Upper lobe of right lung (tissue), 1 donor: ENCODE measurements at regions of chr6 and their contacts with region 1.

Region 1: DNA sequence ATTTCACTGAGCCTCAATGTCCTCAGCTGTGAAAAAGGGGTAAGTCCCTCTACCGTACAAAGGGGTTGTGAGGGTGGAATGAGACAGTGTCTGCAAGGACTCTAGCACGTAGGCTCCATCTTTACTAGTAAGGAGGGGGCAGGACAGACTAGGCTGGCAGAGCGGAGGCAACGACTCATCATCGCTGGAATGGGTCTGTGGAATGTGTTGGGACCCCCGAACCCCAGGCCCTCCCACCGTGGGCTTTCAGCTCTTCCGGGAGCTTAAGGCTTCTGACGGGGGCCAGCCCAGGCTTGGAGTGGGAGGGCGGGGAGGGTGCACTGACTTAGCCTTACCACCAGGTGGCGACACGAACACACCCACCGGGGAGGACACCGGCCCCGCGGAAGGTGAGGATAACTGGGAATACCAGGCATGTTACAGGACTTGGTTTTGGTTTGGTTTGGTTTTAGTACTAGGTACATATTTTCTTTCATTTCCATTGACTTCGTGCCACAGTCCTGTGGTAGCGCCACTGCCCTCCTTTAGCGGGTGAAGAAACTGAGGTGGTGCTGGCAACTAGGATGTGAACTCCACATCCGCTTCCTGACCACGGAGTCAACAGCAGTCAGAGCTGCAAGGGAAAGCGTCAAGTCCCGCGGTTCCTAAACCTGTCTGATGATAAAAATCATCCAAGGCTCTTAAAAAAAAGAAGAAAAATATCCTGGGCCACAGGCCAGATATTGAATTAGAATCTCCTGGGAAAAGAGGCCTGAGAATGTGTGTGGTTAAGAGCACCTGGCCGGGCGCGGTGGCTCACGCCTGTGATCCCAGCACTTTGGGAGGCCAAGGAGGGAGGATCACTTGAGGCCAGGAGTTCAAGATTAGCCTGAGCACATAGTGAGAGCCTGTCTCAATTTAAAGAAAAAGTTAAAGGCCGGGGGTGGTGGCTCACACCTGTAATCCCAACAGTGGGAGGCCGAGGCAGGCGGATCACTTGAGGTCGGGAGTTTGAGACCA is 10.3 kb upstream of the TULP1 start:
- DNase-seq: peak; percentile 88
- ATAC-seq: peak; percentile 97
- H3K4me3 ChIP-seq: peak overlapping the region; percentile 33
- H3K27ac ChIP-seq: no peak overlapping the region
- H3K4me1 ChIP-seq: no peaks in the 10 kb centered on the region
- H3K27me3 ChIP-seq: no peaks in the 10 kb centered on the region
- CTCF ChIP-seq: peak; percentile 99

Region 2: DNA sequence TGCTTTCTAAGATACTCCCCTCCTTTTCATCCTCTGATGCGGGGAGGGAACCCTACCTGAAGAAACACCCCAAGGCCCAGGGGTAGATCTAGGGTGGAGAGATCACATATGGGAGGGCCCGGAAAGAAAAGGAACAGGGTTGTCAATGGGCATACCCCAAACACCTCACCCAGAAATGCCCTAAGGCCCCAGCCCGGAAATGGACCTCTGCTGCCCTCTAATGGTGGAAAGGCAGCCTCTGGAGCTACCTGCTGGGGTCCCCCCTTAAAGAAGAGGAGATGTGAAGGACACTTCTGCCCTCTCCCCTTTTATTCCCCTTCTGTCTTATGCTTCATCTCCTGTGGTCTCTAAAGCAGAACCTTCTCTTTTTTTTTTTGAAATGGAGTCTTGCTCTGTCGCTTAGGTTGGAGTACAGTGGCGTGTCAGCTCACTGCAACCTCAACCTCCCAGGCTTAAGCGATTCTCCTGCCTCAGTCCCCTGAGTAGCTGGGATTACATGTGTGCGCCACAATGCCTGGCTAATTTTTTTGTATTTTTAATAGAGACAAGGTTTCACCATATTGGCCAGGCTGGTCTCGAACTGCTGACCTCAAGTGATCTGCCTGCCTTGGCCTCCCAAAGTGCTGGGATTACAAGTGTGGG is 213.4 kb after region 1 on chr6:
- intact Hi-C with region 1: loop called (anchors 10 kb)
- DNase-seq: peak; percentile 84
- ATAC-seq: peak; percentile 55
- H3K4me3 ChIP-seq: no peak overlapping the region
- H3K27ac ChIP-seq: no peak overlapping the region
- H3K4me1 ChIP-seq: peaks cover 23% of the 10 kb centered on the region
- H3K27me3 ChIP-seq: no peaks in the 10 kb centered on the region
- CTCF ChIP-seq: peak; percentile 95

Region 3: GRCh38 chr6:35757456-35758123 is 234.6 kb after region 1 on chr6:
- intact Hi-C with region 1: no loop called
- DNase-seq: no peak
- ATAC-seq: no peak
- H3K4me3 ChIP-seq: no peak overlapping the region
- H3K27ac ChIP-seq: no peak overlapping the region
- H3K4me1 ChIP-seq: no peaks in the 10 kb centered on the region
- H3K27me3 ChIP-seq: peaks cover 24% of the 10 kb centered on the region
- CTCF ChIP-seq: no peak

Region 4: GRCh38 chr6:35857853-35858252 is 334.9 kb after region 1 on chr6:
- intact Hi-C with region 1: no loop called
- DNase-seq: no peak
- ATAC-seq: no peak
- H3K4me3 ChIP-seq: no peak overlapping the region
- H3K27ac ChIP-seq: no peak overlapping the region
- H3K4me1 ChIP-seq: no peaks in the 10 kb centered on the region
- H3K27me3 ChIP-seq: no peaks in the 10 kb centered on the region
- CTCF ChIP-seq: no peak